Activated naive CD4-positive, alpha-beta T cell treated with anti-CD3 and anti-CD28 coated beads, Interleukin-2, amount 10 ng/mL, durations not matched to agents 7 days and 5 days (primary cell): ENCODE measurements at regions of chr7 and their contacts with region 1.

Region 1: DNA sequence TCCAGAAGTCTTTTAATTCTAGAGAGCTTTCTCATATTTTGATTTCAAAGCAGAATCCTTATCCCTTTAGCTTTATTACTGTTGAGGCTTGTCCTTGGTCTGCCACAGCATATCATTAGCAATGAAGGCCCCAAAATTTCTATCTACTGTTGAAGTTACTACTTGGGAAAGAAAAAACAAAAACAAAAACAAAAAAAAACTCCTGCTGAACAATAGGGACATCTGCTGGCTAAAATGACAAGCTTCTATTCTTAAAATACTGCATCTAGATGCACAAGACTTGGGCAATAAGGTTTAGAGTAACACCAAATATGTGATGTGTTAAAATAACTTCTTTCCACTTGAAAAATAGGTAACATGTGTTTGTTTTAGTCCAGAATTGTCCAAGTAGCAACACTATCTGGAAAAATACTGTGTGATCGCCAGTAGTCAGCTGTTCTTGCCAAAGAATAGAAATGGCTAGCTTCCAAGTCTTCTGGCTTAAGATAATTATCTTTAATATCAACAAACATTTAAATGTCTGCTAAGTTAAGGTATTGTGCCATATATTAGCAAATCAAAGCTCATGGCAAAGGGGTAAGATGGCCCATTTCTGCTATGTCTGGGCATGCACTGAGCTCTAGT is 3.8 kb upstream of the DMTF1 start:
- DNase-seq: no peak
- H3K4me3 Mint-ChIP-seq: no peak overlapping the region
- H3K27ac Mint-ChIP-seq: no peak overlapping the region
- H3K4me1 Mint-ChIP-seq: peaks cover 18% of the 10 kb centered on the region
- H3K27me3 Mint-ChIP-seq: no peaks in the 10 kb centered on the region

Region 2: GRCh38 chr7:86914551-86914950 is 233.9 kb before region 1 on chr7:
- CTCF ChIA-PET with region 1: interaction called, 22 read pairs
- DNase-seq: no peak
- H3K4me3 Mint-ChIP-seq: no peak overlapping the region
- H3K27ac Mint-ChIP-seq: no peak overlapping the region
- H3K4me1 Mint-ChIP-seq: no peaks in the 10 kb centered on the region
- H3K27me3 Mint-ChIP-seq: no peaks in the 10 kb centered on the region

Region 3: GRCh38 chr7:86926732-86927131 is 221.7 kb before region 1 on chr7:
- CTCF ChIA-PET with region 1: interaction called, 79 read pairs
- DNase-seq: peak; percentile 37
- H3K4me3 Mint-ChIP-seq: no peak overlapping the region
- H3K27ac Mint-ChIP-seq: no peak overlapping the region
- H3K4me1 Mint-ChIP-seq: no peaks in the 10 kb centered on the region
- H3K27me3 Mint-ChIP-seq: peaks cover 4% of the 10 kb centered on the region

Region 4: GRCh38 chr7:86939197-86939814 is 209.1 kb before region 1 on chr7:
- CTCF ChIA-PET with region 1: interaction called, 10 read pairs
- DNase-seq: peak; percentile 44
- H3K4me3 Mint-ChIP-seq: no peak overlapping the region
- H3K27ac Mint-ChIP-seq: no peak overlapping the region
- H3K4me1 Mint-ChIP-seq: no peaks in the 10 kb centered on the region
- H3K27me3 Mint-ChIP-seq: no peaks in the 10 kb centered on the region

Region 5: DNA sequence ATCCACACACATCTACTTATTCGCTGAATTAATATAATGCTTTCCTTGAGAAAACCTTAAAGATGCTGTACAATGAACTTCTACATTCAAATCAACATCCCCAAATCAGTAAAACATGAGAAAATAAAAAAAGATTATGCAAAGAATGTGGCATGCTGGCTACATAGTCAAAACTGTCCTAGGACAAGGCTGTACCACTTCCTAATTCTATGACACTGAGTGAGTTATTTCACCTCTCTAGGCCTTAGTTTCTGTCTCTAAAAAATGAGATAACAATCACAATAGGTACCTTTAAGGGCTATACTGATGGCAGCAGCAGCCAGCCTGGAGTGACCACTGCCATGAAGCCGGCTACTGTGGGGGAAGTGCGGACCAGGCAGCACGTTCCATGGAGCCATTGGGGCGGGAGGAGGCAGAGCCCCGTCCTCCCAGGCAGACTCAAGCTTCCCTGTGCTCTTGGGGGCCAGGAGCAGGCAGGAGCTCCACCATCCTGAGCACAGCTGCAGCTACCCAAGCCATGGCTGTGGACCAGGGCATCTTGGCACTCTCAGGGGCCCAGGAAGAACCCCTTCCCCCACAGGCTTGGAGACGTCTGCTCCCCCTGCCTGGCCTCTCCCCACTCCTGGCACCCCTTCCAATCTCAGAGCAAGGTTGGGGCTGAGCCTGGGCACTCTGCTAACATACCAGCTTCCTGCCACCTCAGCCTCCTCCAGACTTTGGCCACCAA is 199.2 kb before region 1 on chr7:
- CTCF ChIA-PET with region 1: interaction called, 10 read pairs
- DNase-seq: no peak
- H3K4me3 Mint-ChIP-seq: no peak overlapping the region
- H3K27ac Mint-ChIP-seq: no peak overlapping the region
- H3K4me1 Mint-ChIP-seq: peaks cover 2% of the 10 kb centered on the region
- H3K27me3 Mint-ChIP-seq: no peaks in the 10 kb centered on the region

Region 6: DNA sequence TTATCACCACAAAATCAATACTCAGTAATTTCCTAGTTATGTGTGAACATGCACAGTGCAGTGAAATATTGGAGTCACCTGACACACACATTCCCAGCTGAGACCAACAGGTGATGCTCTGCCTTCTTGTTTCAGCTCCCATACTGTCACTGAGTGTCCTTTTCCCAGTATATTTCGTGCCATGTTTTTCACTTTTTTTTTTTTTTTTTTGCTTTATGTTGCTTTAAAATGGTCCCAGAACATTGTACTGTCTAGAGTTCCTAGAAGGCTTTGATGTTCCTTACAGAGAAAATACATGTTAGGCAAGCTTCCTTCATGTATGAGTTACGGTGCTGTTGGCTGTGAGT is 134.6 kb before region 1 on chr7:
- CTCF ChIA-PET with region 1: no interaction called
- DNase-seq: no peak
- H3K4me3 Mint-ChIP-seq: no peak overlapping the region
- H3K27ac Mint-ChIP-seq: no peak overlapping the region
- H3K4me1 Mint-ChIP-seq: no peaks in the 10 kb centered on the region
- H3K27me3 Mint-ChIP-seq: no peaks in the 10 kb centered on the region